ENCODE measurements at regions of chr17 and their contacts with region 1.

Region 1: GRCh38 chr17:49637050-49637449 is 40.8 kb downstream of the SPOP start:
- DNase-seq: no peak
- H3K4me3 ChIP-seq: no peak overlapping the region
- H3K27ac ChIP-seq: no peak overlapping the region
- H3K4me1 ChIP-seq: no peaks in the 10 kb centered on the region
- H3K27me3 ChIP-seq: no peaks in the 10 kb centered on the region
- CTCF ChIP-seq: no peak

Region 2: DNA sequence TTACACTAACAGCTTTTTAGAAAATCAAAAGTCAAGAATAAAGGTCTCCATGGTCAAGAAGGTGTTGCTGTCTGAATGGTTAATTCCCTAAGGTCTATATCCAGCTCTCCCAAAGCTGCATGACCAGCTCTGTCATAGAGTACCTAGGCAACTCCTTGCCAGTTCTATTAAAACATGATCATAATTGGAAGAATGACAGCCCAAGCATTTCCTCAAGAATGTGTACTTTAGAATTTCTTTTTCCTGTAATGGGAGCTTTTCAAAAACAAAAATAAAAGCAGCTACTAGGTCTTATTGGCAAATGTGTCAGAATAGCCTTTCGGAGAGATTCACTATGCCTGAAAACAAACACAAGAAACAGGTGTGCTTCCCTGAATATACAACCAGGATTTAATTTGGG is 33.0 kb after region 1 on chr17:
- CTCF ChIA-PET with region 1: no interaction called
- dilution Hi-C with region 1: loop called (anchors 5 kb)
- in situ Hi-C with region 1: no loop called
- intact Hi-C with region 1: loop called (anchors 5 kb)
- DNase-seq: no peak
- H3K4me3 ChIP-seq: no peak overlapping the region
- H3K27ac ChIP-seq: no peak overlapping the region
- H3K4me1 ChIP-seq: no peaks in the 10 kb centered on the region
- H3K27me3 ChIP-seq: no peaks in the 10 kb centered on the region
- CTCF ChIP-seq: no peak

Region 3: DNA sequence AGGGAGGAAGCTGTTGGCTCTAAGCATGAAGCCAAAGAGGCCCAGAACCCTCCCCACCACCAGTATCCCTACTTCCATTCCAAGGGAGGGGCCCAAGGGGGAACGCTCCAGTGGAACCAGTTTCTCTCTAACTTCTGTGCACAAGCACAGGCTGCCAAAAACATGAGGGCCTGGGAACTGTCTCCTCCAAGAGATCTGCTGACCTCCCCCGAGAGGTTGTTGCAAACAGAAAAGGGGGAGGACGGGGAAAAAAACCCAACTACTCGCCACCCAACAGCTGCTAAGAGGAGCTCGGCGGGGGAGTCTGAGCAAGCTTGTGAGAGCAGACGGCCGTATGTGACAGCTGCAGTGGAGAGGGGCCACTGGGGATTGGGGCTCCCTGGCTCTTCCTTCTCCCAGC is 86.4 kb after region 1 on chr17:
- CTCF ChIA-PET with region 1: no interaction called
- dilution Hi-C with region 1: no loop called
- in situ Hi-C with region 1: no loop called
- intact Hi-C with region 1: no loop called
- DNase-seq: no peak
- H3K4me3 ChIP-seq: no peak overlapping the region
- H3K27ac ChIP-seq: no peak overlapping the region
- H3K4me1 ChIP-seq: no peaks in the 10 kb centered on the region
- H3K27me3 ChIP-seq: no peaks in the 10 kb centered on the region
- CTCF ChIP-seq: no peak

Measured in mammary epithelial cell (primary cell).